Mammary epithelial cell (primary cell): ENCODE measurements at regions of chr13 and their contacts with region 1.

Region 1: DNA sequence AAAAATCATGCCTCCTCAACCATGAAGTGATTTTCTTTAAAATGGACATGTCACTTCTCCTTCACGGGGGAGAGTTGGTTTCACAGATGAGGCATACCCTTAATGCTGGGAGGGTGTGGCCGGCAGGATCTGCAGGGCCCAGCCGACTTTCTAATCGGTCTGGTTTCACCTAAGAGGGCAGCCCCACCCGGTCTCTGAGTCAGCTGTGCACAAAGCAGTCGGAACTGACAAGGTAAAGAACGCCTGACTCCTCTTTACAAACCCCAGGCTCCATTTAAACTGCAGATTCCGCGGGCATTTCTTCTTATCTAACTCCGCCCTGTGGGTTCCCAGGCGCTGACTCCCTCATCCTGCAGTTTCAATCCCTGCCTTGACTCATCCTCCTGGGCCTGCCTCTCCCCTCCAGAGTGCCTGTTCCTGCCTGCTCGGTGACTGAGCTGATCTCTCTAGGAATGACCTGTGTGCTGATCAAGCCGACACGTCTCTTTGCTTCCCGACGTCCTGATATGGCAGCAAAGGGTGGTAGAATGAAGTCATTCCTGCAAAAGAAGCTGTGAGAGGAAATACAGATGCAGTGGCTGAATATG is 63.4 kb downstream of the EFNB2 start:
- DNase-seq: peak; percentile 100
- H3K4me3 ChIP-seq: no peak overlapping the region
- H3K27ac ChIP-seq: peak overlapping the region; percentile 99
- H3K4me1 ChIP-seq: peaks cover 22% of the 10 kb centered on the region
- H3K27me3 ChIP-seq: no peaks in the 10 kb centered on the region
- CTCF ChIP-seq: no peak

Region 2: DNA sequence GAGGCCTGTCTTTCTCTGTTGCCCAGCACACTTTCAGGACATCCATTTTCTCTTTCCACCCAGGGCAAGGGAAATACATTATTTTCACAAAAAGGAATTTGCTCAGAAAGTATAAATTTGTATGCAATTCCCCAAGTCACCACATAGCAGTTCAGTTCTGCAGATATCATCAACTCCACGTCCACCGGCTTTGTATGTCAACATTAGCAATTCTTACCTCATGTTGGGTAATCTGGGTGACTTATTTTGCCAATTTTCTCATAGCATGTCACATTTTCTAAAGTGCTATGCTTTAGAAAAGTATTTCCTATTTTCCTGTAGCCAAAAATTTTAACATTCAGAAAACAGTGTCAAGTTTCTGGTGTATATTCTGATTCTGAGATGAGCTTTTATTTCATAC is 438.4 kb before region 1 on chr13:
- CTCF ChIA-PET with region 1: no interaction called
- dilution Hi-C with region 1: no loop called
- in situ Hi-C with region 1: no loop called
- intact Hi-C with region 1: no loop called
- DNase-seq: no peak
- H3K4me3 ChIP-seq: no peak overlapping the region
- H3K27ac ChIP-seq: no peak overlapping the region
- H3K4me1 ChIP-seq: peaks cover 6% of the 10 kb centered on the region
- H3K27me3 ChIP-seq: no peaks in the 10 kb centered on the region
- CTCF ChIP-seq: peak in 1 of 2 donors; percentile 19

Region 3: DNA sequence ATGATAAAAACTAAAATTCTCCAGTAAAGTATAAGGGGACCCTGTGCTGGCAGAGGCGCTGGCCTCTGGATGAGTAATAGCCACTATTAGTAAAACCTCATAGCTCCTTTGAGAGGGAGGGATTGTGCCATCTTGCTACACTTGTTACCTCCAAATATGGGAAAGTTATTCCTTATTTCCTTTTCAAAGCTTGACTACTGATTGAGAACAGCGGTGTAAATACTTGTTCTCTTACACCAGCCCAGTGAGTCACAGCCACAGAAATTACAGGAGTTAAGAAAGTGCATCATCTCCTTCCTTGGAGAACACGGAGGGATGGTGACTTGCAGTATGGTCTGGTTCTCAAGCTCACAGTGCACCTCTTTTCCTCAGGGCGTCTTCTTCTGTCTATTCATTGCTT is 315.6 kb before region 1 on chr13:
- CTCF ChIA-PET with region 1: no interaction called
- dilution Hi-C with region 1: no loop called
- in situ Hi-C with region 1: no loop called
- intact Hi-C with region 1: loop called (anchors 2 kb)
- DNase-seq: peak; percentile 99
- H3K4me3 ChIP-seq: no peak overlapping the region
- H3K27ac ChIP-seq: peak overlapping the region; percentile 98
- H3K4me1 ChIP-seq: peaks cover 62% of the 10 kb centered on the region
- H3K27me3 ChIP-seq: no peaks in the 10 kb centered on the region
- CTCF ChIP-seq: no peak

Region 4: GRCh38 chr13:106507560-106508274 is 35.7 kb after region 1 on chr13:
- CTCF ChIA-PET with region 1: no interaction called
- dilution Hi-C with region 1: no loop called
- in situ Hi-C with region 1: no loop called
- intact Hi-C with region 1: loop called (anchors 2 kb)
- DNase-seq: peak; percentile 97
- H3K4me3 ChIP-seq: peak overlapping the region; percentile 8 to 51 (median 45)
- H3K27ac ChIP-seq: peak overlapping the region; percentile 98
- H3K4me1 ChIP-seq: peaks cover 35% of the 10 kb centered on the region
- H3K27me3 ChIP-seq: no peaks in the 10 kb centered on the region
- CTCF ChIP-seq: no peak